Heart right ventricle (tissue), 16 donors: ENCODE measurements at regions of chr20 and their contacts with region 1.

Region 1: DNA sequence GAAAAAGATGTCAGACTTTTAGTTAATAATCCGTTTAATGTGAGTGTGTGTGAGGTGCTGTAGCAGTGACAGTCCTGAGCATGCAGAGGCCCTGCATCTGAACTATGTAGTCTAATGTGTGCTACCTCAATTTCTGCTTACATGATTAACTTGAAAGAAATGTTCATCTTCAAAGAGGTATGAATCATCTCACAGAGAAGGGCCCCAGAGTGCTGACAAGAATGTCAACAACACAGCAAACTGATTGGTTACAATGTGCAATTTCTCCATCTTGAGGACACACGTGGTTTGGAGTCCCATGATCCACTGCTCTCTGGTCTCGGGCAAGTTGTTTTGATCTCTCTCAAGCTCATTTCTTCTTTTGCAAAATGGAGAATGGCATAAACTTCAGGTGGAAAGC is 61.7 kb upstream of the EMILIN3 start:
- DNase-seq: no peak
- ATAC-seq: no peak
- H3K4me3 ChIP-seq: no peak overlapping the region
- H3K27ac ChIP-seq: no peak overlapping the region
- H3K4me1 ChIP-seq: peaks cover 0 to 29% (median 9%) of the 10 kb centered on the region in 9 donors
- H3K27me3 ChIP-seq: no peaks in the 10 kb centered on the region
- CTCF ChIP-seq: no peak

Region 2: GRCh38 chr20:41370176-41370575 is 58.1 kb before region 1 on chr20:
- intact Hi-C with region 1: no loop called
- DNase-seq: no peak
- ATAC-seq: no peak
- H3K4me3 ChIP-seq: no peak overlapping the region
- H3K27ac ChIP-seq: no peak overlapping the region
- H3K4me1 ChIP-seq: peaks cover 4 to 14% (median 6%) of the 10 kb centered on the region in 9 donors
- H3K27me3 ChIP-seq: peaks cover 0 to 36% (median 16%) of the 10 kb centered on the region in 7 donors
- CTCF ChIP-seq: no peak

Region 3: DNA sequence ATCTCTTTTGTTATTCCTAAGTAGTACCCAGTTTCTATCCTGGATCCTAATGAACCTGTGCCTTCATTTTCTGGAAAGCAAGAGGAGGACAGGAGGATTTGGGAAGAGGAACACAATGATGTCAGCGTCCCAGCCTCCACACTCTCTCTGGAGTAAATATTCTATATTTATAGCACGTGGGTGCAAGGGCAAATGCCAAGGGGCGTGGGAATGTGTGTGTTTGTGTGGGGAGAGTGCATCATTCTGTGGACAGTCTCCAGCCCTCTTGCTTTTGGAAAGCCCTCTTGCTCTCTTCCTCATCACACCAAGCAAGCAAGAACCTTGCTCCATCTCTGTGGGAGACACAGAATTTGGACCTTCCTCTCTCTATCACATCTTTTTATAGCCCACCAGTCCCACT is 41.6 kb after region 1 on chr20:
- intact Hi-C with region 1: loop called in 1 of 10 experiments (anchors 5 kb)
- DNase-seq: peak; percentile 46 to 77
- ATAC-seq: peak; percentile 74 to 88 (median 80)
- H3K4me3 ChIP-seq: no peak overlapping the region
- H3K27ac ChIP-seq: peak overlapping the region in 9 of 10 donors; percentile 23 to 76 (median 56)
- H3K4me1 ChIP-seq: peaks cover 0 to 41% (median 20%) of the 10 kb centered on the region in 9 donors
- H3K27me3 ChIP-seq: no peaks in the 10 kb centered on the region
- CTCF ChIP-seq: no peak